ENCODE measurements at regions of chr4 and their contacts with region 1.

Region 1: DNA sequence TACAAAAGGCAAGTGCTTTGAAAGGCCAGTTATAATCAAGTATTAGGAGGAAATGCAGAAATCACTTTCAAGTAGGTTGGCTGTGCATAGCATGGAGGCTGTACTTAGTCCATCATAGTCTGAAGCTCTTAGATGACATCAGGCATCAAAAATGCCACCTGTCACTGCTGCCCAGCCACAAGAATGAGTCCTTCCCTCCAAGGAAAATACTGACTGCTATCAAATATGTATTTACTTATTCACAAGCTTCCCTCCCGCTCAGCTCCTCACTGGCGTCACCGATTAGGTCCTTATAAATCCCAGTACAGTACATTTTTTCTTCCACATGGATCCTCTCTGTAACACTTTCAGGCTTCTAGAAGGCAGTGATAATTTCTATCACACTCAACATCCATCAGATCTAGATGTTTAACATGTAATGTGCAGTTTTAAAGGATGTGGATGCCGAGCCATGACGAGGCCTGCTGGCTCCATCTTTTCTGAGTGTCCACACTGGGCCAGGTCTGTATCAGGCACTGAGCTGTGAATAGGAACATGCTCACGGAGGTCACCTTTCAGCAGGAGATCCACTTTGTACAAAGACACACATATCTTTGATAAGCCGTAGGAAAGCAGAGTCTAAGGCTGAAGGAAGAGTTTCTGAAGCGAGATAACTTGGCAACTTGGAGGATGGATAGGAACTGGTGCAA is 121.9 kb downstream of the PALLD start:
- DNase-seq: no peak
- H3K4me3 ChIP-seq: no peak overlapping the region
- H3K27ac ChIP-seq: no peak overlapping the region
- H3K4me1 ChIP-seq: no peaks in the 10 kb centered on the region
- H3K27me3 ChIP-seq: no peaks in the 10 kb centered on the region
- CTCF ChIP-seq: no peak
- POLR2A ChIP-seq: no peak

Region 2: DNA sequence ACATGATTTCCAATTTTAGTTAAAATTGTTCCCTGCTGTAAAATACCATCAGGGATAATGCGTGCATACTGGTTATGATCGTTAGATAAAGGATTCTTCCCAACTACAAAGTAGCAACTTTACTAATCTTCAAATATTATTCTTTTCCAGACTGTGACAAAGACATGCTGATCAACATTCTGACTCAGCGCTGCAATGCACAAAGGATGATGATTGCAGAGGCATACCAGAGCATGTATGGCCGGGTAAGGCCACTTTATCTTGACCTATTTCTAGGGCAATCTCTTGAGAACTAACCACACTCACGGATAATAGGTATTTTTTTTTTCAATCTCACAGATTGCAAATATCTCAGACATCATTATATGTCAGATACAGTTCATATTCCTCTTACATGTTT is 479.4 kb before region 1 on chr4:
- CTCF ChIA-PET with region 1: no interaction called
- POLR2A ChIA-PET with region 1: no interaction called
- dilution Hi-C with region 1: no loop called
- intact Hi-C with region 1: no loop called
- DNase-seq: no peak
- H3K4me3 ChIP-seq: no peak overlapping the region
- H3K27ac ChIP-seq: no peak overlapping the region
- H3K4me1 ChIP-seq: no peaks in the 10 kb centered on the region
- H3K27me3 ChIP-seq: no peaks in the 10 kb centered on the region
- CTCF ChIP-seq: no peak
- POLR2A ChIP-seq: no peak

Region 3: DNA sequence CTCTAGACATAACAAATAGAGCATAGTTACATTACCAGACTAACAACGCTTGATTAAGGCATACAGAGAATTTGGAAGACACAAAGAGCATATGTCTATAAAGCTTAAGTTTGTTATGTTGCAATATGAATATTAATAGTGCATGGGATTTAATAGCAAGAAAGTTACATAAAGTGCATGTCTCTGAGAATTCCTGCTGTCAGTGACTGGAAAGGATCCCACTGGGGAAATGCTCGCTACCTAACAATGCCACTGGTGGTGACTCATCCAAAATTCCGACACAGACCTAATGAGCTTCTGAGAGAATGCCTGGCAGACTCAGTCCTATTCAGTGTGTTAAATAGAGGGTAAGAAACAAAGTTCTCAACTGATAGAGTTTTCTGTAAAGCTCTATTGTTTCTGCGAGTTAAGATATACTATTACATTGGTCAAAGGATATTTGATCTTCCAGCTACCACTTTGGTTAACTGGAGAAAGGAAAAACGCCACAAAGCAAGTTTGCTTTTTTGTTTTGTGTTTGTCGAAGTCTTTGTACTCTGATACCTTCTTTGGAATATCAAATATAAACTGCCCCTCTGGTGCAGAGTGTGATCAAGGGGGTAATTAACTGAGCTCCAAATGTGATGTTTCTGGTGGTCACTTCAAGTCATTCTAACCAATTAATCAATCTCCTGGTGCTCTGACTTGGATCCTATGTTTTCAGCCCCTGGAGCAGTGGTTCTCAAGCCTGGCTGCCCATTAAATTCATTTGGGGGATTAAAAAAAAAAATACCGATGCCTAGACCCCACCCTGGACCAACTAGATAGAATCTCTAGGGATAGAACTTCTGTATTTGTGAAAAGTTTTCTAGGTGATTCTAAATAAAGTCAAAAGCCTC is 14.0 kb before region 1 on chr4:
- CTCF ChIA-PET with region 1: interaction called, 12 read pairs
- POLR2A ChIA-PET with region 1: no interaction called
- dilution Hi-C with region 1: no loop called
- intact Hi-C with region 1: no loop called
- DNase-seq: peak; percentile 96
- H3K4me3 ChIP-seq: no peak overlapping the region
- H3K27ac ChIP-seq: peak overlapping the region; percentile 64
- H3K4me1 ChIP-seq: peaks cover 25% of the 10 kb centered on the region
- H3K27me3 ChIP-seq: no peaks in the 10 kb centered on the region
- CTCF ChIP-seq: no peak
- POLR2A ChIP-seq: peak; percentile 22

Region 4: DNA sequence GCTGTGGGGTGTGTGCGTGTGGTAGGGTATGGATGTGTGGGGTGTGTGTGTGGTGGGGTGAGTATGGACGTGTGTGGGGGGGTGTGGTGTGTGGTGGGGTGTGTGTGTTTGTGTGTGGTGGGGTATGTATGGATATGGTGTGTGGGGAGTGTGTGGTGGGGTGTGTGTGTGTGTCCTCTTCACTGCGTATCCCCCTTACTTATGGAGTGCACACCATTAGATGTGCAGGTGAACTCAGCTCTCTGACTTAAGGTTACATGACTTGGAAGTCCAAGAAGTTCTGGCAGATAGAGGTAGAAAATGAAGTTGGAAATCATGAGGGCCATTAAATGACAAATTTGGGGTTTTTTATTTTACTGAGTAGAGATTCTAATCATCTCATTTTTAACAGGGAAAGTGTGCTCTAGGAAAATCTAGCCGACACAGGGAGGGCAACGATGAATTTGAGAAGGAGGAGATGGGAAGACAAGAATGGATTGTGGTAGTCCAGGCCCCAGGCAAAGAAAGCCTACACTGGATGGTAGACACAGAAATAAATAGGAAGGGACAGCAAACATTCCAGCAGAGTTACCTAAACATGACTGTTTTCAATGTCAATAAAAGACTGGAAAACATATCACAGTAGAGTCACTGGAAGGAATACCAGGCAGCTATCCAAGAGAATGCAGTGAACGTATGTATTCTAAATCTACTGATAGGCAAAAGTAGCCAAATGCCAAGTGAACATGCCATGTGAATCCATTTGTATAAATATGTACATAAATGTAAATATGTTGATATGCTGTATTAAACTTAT is 60.9 kb after region 1 on chr4:
- CTCF ChIA-PET with region 1: no interaction called
- POLR2A ChIA-PET with region 1: no interaction called
- dilution Hi-C with region 1: no loop called
- intact Hi-C with region 1: no loop called
- DNase-seq: no peak
- H3K4me3 ChIP-seq: no peak overlapping the region
- H3K27ac ChIP-seq: no peak overlapping the region
- H3K4me1 ChIP-seq: no peaks in the 10 kb centered on the region
- H3K27me3 ChIP-seq: no peaks in the 10 kb centered on the region
- CTCF ChIP-seq: no peak
- POLR2A ChIP-seq: no peak